ENCODE measurements at regions of chr7 and their contacts with region 1.

Region 1: DNA sequence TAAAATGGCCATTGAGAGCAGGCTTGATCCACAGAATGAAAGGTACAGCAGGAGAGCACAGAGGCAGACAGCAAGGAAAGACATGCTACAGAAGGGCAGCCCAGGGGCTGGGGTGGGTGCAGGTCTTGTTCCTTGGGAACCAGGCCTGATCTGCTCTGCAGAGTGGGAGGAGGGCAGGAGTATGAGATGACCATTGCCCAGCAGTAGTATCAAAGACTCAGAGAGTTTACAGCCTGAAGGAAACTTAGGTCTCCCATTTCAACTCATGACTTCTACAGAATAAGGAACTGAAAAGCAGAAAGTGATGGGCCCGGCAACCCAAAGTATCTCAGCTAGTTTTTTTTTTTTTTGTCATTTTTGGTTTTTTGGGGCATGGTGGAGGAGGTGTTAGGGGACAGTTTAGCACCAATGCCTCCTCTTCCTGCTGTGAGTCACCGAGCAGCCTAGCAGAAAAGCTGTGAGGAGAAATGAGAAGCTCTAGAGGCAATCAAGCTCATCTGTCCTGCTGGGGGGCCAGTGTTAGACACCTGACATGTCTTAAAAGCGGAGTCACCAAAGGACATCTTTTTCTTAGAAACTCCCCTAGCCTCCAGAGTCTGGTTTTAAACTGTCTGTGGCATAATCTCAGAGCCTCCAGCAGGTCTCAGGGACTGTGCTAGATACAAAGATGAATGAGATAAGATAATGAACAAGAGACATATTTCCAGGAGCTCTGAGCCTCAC is 34.3 kb upstream of the HERPUD2 start:
- DNase-seq: peak; percentile 84
- ATAC-seq: peak; percentile 72
- H3K4me3 Mint-ChIP-seq: peak overlapping the region; percentile 50
- H3K27ac Mint-ChIP-seq: peak overlapping the region; percentile 88
- H3K4me1 Mint-ChIP-seq: peaks cover 68% of the 10 kb centered on the region
- H3K27me3 Mint-ChIP-seq: peaks cover 18% of the 10 kb centered on the region

Region 2: DNA sequence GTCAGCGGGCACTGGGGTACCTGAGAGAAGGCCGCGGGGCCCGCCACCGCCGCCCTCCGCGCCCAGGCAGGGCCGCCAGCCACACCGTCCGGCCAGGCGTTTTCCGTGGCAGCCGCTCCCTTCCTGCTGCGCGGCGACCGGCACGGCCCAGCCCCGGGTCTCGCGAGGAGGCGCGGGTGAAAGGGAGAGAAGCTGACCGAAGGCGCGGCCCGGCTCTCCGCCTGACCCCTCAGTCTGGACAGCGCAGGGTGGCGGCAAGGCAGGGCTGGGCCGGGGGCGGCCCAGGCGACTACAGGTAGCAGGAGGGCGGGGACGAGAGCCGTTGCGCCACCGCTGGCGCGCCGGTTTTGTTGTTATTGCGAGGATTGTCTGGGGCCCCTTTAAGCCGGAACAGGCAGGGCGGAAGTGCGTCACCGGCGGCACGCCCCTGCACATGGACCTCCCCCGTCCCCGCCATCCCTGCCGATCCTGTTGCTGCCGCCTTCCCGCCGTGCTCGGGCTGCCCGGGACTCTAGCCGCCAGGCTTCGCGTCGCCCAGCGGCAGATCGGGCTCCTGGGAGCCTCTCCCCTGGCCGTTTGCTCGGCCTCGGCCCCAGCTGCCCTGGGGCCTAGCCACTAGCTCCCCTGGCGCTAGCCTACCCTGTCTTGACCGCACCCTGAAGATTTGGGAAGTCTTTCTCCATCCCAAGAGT is 34.3 kb before region 1 on chr7 and contains the start of gene HERPUD2:
- CTCF ChIA-PET with region 1: interaction called, 70 read pairs
- DNase-seq: peak; percentile 95
- ATAC-seq: peak; percentile 82
- H3K4me3 Mint-ChIP-seq: peak within 1 kb of the TSS; percentile 96
- H3K27ac Mint-ChIP-seq: peak within 1 kb of the TSS; percentile 93
- H3K4me1 Mint-ChIP-seq: peaks cover 30% of the 10 kb centered on the region
- H3K27me3 Mint-ChIP-seq: no peaks in the 10 kb centered on the region
- total RNA-seq, gene HERPUD2: 47.0 to 49.4 TPM

Region 3: DNA sequence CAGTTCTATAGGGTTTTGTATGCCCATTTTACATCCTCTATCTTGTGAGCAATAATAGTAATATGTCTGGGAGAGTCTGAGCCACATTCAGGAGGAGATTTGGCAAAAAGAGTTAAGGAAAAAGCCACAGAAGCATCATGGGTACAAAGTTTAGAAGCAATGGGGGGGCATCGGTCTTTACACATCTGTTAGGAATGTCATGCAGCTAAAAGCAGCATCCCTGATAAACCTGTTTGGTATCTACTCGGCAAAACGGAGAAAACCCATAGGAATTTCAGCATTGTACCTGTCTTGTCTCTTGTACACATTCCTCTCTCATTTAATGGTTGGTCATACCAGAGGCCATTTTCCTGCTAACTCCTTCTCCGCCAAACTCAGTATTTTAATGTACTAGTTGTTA is 21.8 kb before region 1 on chr7:
- CTCF ChIA-PET with region 1: interaction called, 61 read pairs
- DNase-seq: no peak
- ATAC-seq: no peak
- H3K4me3 Mint-ChIP-seq: no peak overlapping the region
- H3K27ac Mint-ChIP-seq: no peak overlapping the region
- H3K4me1 Mint-ChIP-seq: peaks cover 32% of the 10 kb centered on the region
- H3K27me3 Mint-ChIP-seq: peaks cover 8% of the 10 kb centered on the region

Region 4: GRCh38 chr7:35716038-35716803 is 13.0 kb before region 1 on chr7:
- CTCF ChIA-PET with region 1: interaction called, 61 read pairs
- DNase-seq: no peak
- ATAC-seq: no peak
- H3K4me3 Mint-ChIP-seq: no peak overlapping the region
- H3K27ac Mint-ChIP-seq: no peak overlapping the region
- H3K4me1 Mint-ChIP-seq: peaks cover 10% of the 10 kb centered on the region
- H3K27me3 Mint-ChIP-seq: no peaks in the 10 kb centered on the region

Region 5: DNA sequence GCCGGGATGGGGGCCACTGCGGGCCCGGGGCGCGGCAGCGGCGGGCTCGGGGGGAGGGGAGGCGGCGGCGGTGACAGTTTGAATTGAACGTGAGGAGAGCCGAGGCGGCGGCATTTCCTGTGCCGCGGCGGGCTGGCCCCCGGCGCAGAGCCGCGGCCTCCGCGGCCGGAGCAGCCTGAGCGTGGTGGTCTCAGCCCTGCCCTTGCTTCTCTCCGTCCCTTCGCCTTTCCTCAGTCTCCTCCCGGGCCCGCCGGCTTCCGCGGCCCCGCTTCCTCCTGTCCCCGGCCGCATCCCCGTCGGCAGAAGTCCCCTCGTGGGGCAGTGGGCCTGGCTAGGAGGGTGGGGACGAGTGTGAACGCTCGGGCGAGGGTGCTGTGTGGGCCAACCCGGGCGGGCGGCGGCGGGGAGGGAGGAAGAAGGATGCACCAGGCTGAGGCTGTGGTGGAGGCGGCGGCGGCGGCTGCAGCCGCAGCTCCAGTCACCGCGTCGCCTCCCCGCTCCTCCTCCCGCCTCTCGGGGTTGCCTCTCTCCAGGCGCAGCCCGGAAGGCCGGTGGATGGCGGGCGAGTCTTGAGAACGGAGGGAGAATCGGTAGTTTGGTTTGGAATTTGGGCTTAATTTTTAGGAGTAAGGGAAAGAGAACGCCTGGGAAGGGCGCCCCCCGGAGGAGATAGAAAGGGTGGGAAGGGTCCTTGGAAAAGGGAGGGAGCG is 72.3 kb after region 1 on chr7:
- CTCF ChIA-PET with region 1: interaction called, 67 read pairs
- DNase-seq: peak; percentile 81
- ATAC-seq: peak; percentile 35
- H3K4me3 Mint-ChIP-seq: peak overlapping the region; percentile 97
- H3K27ac Mint-ChIP-seq: peak overlapping the region; percentile 98
- H3K4me1 Mint-ChIP-seq: peaks cover 41% of the 10 kb centered on the region
- H3K27me3 Mint-ChIP-seq: no peaks in the 10 kb centered on the region

Region 6: GRCh38 chr7:36794689-36795088 is 1065.5 kb after region 1 on chr7:
- CTCF ChIA-PET with region 1: no interaction called
- DNase-seq: no peak
- ATAC-seq: no peak
- H3K4me3 Mint-ChIP-seq: no peak overlapping the region
- H3K27ac Mint-ChIP-seq: no peak overlapping the region
- H3K4me1 Mint-ChIP-seq: peaks cover 51% of the 10 kb centered on the region
- H3K27me3 Mint-ChIP-seq: no peaks in the 10 kb centered on the region

Measured in activated CD8-positive, alpha-beta memory T cell treated with anti-CD3 and anti-CD28 coated beads, Interleukin-2, amount 10 ng/mL, durations not matched to agents 7 days and 5 days (primary cell).